ENCODE measurements at regions of chrX and their contacts with region 1.

Region 1: GRCh38 chrX:134572816-134573682 is 85.2 kb downstream of the PLAC1 start:
- DNase-seq: peak; percentile 58 to 89
- H3K4me3 ChIP-seq: peak overlapping the region; percentile 10; the same call in 1 of the 2 replicates
- H3K27ac ChIP-seq: peak overlapping the region; percentile 58
- H3K4me1 ChIP-seq: peaks cover 69% of the 10 kb centered on the region
- H3K27me3 ChIP-seq: no peaks in the 10 kb centered on the region
- CTCF ChIP-seq: no peak

Region 2: GRCh38 chrX:133709486-133709885 is 863.6 kb before region 1 on chrX:
- CTCF ChIA-PET with region 1: no interaction called
- POLR2A ChIA-PET with region 1: no interaction called
- intact Hi-C with region 1: no loop called
- DNase-seq: no peak
- H3K4me3 ChIP-seq: no peak overlapping the region
- H3K27ac ChIP-seq: no peak overlapping the region
- H3K4me1 ChIP-seq: no peaks in the 10 kb centered on the region; the same call in 1 of the 2 replicates
- H3K27me3 ChIP-seq: no peaks in the 10 kb centered on the region
- CTCF ChIP-seq: no peak

Region 3: GRCh38 chrX:134526399-134526798 is 46.6 kb before region 1 on chrX:
- CTCF ChIA-PET with region 1: no interaction called
- POLR2A ChIA-PET with region 1: no interaction called
- intact Hi-C with region 1: loop called (anchors 2 kb)
- DNase-seq: no peak
- H3K4me3 ChIP-seq: no peak overlapping the region
- H3K27ac ChIP-seq: no peak overlapping the region
- H3K4me1 ChIP-seq: peaks cover 19% of the 10 kb centered on the region
- H3K27me3 ChIP-seq: no peaks in the 10 kb centered on the region
- CTCF ChIP-seq: no peak

Region 4: GRCh38 chrX:134537179-134537955 is 35.7 kb before region 1 on chrX:
- CTCF ChIA-PET with region 1: no interaction called
- POLR2A ChIA-PET with region 1: no interaction called
- intact Hi-C with region 1: loop called (anchors 5 kb)
- DNase-seq: peak; percentile 63 to 89
- H3K4me3 ChIP-seq: no peak overlapping the region; the same call in 1 of the 2 replicates
- H3K27ac ChIP-seq: peak overlapping the region; percentile 83
- H3K4me1 ChIP-seq: peaks cover 53% of the 10 kb centered on the region
- H3K27me3 ChIP-seq: no peaks in the 10 kb centered on the region
- CTCF ChIP-seq: no peak

Region 5: GRCh38 chrX:134706138-134706537 is 133.1 kb after region 1 on chrX:
- CTCF ChIA-PET with region 1: no interaction called
- POLR2A ChIA-PET with region 1: no interaction called
- intact Hi-C with region 1: no loop called
- DNase-seq: no peak
- H3K4me3 ChIP-seq: no peak overlapping the region
- H3K27ac ChIP-seq: no peak overlapping the region
- H3K4me1 ChIP-seq: no peaks in the 10 kb centered on the region
- H3K27me3 ChIP-seq: no peaks in the 10 kb centered on the region
- CTCF ChIP-seq: no peak

Region 6: GRCh38 chrX:134753718-134754008 is 180.6 kb after region 1 on chrX:
- CTCF ChIA-PET with region 1: interaction called, 10 read pairs
- POLR2A ChIA-PET with region 1: interaction called, 6 read pairs
- intact Hi-C with region 1: no loop called
- DNase-seq: no peak
- H3K4me3 ChIP-seq: no peak overlapping the region
- H3K27ac ChIP-seq: no peak overlapping the region
- H3K4me1 ChIP-seq: peaks cover 8% of the 10 kb centered on the region; the same call in 1 of the 2 replicates
- H3K27me3 ChIP-seq: no peaks in the 10 kb centered on the region
- CTCF ChIP-seq: no peak; the same call in 1 of the 2 replicates

Measured in PC-9 (cell line).